Ovary (tissue), 10 donors: ENCODE measurements at regions of chr17 and their contacts with region 1.

Region 1: GRCh38 chr17:81601525-81602120 is 35.3 kb downstream of the NPLOC4 start:
- DNase-seq: peak in 2 of 5 donors; percentile 28 to 53
- H3K4me3 ChIP-seq: no peak overlapping the region
- H3K27ac ChIP-seq: no peak overlapping the region
- H3K4me1 ChIP-seq: no peaks in the 10 kb centered on the region
- H3K27me3 ChIP-seq: no peaks in the 10 kb centered on the region
- CTCF ChIP-seq: peak; percentile 47 to 69 (median 67)
- EP300 ChIP-seq: no peak
- POLR2A ChIP-seq: no peak

Region 2: GRCh38 chr17:81253358-81254131 is 348.1 kb before region 1 on chr17:
- intact Hi-C with region 1: loop called (anchors 5 to 10 kb)
- DNase-seq: peak in 2 of 5 donors; percentile 47 to 72
- H3K4me3 ChIP-seq: no peak overlapping the region
- H3K27ac ChIP-seq: no peak overlapping the region
- H3K4me1 ChIP-seq: peaks cover 3% of the 10 kb centered on the region
- H3K27me3 ChIP-seq: no peaks in the 10 kb centered on the region
- CTCF ChIP-seq: peak; percentile 57 to 92 (median 90)
- EP300 ChIP-seq: no peak
- POLR2A ChIP-seq: peak; percentile 31

Region 3: DNA sequence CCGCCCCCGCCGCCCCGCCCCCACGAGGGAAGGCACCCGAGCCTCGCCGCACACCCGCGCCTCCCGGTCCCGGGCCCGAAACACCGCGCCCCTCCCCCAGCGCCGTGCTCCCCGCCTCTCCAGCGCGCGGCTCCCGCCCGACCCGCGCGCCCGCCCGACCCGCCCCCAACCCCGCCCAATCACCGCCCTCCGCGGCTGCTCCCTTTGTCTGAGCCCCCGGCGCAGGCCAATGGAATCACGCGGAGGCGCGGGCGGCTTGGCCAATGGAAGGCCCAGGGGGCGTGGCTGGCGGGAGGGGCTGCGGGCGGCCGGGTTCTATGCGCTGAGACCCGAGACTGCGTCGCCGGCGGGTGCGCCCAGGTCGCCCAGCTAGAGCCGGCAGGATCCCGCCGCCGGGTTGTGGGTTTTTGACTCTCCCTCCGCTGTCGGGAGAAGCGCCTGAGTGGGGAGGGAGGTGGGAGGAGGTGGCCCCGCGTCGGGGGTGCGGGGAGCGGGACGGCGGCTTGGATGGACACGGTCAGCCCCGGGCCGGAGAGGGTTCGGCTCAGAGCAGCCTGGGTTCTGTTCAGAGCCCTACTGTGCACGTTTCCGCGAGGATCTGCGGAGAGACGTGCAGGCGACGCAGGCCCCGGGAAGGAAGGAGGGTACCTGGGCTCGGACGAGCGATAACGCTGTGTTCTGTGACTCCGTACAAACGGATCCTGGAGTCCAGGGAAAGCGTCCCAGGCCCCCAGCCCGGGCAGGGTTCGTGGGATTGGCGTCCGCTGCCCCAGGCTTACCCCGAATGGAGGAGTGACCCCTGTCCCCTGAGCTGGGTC is 255.3 kb before region 1 on chr17:
- intact Hi-C with region 1: no loop called
- DNase-seq: peak; percentile 99
- H3K4me3 ChIP-seq: peak overlapping the region; percentile 80
- H3K27ac ChIP-seq: peak overlapping the region; percentile 5 to 99
- H3K4me1 ChIP-seq: peaks cover 2% of the 10 kb centered on the region
- H3K27me3 ChIP-seq: no peaks in the 10 kb centered on the region
- CTCF ChIP-seq: no peak
- EP300 ChIP-seq: no peak
- POLR2A ChIP-seq: peak; percentile 88

Region 4: GRCh38 chr17:81522491-81523474 is 78.8 kb before region 1 on chr17:
- intact Hi-C with region 1: loop called in 2 of 4 experiments (anchors 10 kb)
- DNase-seq: peak in 2 of 5 donors; percentile 14 to 28
- H3K4me3 ChIP-seq: no peak overlapping the region
- H3K27ac ChIP-seq: no peak overlapping the region
- H3K4me1 ChIP-seq: peaks cover 9% of the 10 kb centered on the region
- H3K27me3 ChIP-seq: peaks cover 3% of the 10 kb centered on the region
- CTCF ChIP-seq: no peak
- EP300 ChIP-seq: no peak
- POLR2A ChIP-seq: no peak